ENCODE measurements at regions of chr13 and their contacts with region 1.

Region 1: DNA sequence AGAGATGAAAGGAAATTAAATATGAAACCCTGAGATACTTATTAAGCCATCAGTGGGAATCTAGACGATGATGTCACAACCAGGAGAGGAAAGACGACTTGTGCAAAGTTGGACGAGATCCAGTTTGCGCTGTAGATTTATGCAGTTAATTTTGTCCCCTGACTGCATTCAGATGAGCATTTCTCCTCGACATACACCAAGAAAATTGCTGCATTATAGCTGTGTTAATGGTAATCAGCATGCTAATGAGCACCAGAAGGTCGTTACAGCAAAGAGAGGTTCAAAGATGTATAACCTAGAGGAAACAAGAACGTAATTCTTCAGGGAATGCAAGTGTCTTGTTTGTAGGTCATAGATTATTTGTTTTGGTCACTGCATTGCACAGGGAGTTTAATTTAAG is 371.7 kb downstream of the RBM26 start:
- DNase-seq: no peak
- ATAC-seq: no peak
- H3K4me3 ChIP-seq: no peak overlapping the region
- H3K27ac ChIP-seq: no peak overlapping the region
- H3K4me1 ChIP-seq: no peaks in the 10 kb centered on the region
- H3K27me3 ChIP-seq: no peaks in the 10 kb centered on the region; a peak in 1 of 4 replicates
- CTCF ChIP-seq: no peak
- EP300 ChIP-seq: no peak
- POLR2A ChIP-seq: no peak
- RAD21 ChIP-seq: no peak

Region 2: DNA sequence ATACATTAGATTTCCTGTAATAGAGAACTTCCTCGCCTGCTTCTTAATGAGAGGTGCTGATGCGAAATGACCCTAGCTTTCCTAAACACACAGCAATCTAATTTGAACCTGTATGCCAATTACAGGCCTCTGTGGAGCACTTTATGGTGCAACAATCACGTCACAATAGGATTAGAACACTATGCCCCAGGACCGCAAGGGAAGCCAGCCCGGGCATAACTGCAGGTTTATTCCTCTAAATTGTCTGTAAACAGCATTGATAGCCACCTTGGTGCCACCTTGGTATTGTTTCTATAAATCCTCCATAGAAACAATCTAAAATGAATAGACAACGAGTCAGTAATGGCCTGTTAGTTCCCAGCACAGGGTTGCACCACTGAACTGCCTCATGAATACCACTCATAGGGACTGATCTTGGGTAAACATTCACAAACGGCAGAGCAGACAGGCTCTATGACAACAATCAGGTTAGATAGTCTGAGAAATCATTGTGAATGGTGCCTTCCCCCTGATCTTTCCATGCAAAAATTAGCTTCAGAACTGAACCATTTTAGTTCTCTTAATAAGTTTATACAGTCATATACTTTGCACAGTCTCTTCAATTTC is 192.9 kb before region 1 on chr13:
- CTCF ChIA-PET with region 1: no interaction called
- POLR2A ChIA-PET with region 1: no interaction called
- RAD21 ChIA-PET with region 1: no interaction called
- SMC1A ChIA-PET with region 1: no interaction called
- in situ Hi-C with region 1: no loop called
- intact Hi-C with region 1: no loop called
- DNase-seq: no peak
- ATAC-seq: no peak
- H3K4me3 ChIP-seq: no peak overlapping the region
- H3K27ac ChIP-seq: no peak overlapping the region
- H3K4me1 ChIP-seq: no peaks in the 10 kb centered on the region
- H3K27me3 ChIP-seq: no peaks in the 10 kb centered on the region
- CTCF ChIP-seq: no peak
- EP300 ChIP-seq: no peak
- POLR2A ChIP-seq: no peak
- RAD21 ChIP-seq: no peak

Region 3: GRCh38 chr13:79018166-79018565 is 16.2 kb before region 1 on chr13:
- CTCF ChIA-PET with region 1: interaction called, 3 read pairs
- POLR2A ChIA-PET with region 1: no interaction called
- RAD21 ChIA-PET with region 1: no interaction called
- SMC1A ChIA-PET with region 1: interaction called, 15 read pairs
- in situ Hi-C with region 1: no loop called
- intact Hi-C with region 1: no loop called
- DNase-seq: no peak
- ATAC-seq: no peak
- H3K4me3 ChIP-seq: no peak overlapping the region
- H3K27ac ChIP-seq: no peak overlapping the region
- H3K4me1 ChIP-seq: no peaks in the 10 kb centered on the region
- H3K27me3 ChIP-seq: no peaks in the 10 kb centered on the region
- CTCF ChIP-seq: no peak
- EP300 ChIP-seq: no peak
- POLR2A ChIP-seq: no peak
- RAD21 ChIP-seq: no peak

Region 4: DNA sequence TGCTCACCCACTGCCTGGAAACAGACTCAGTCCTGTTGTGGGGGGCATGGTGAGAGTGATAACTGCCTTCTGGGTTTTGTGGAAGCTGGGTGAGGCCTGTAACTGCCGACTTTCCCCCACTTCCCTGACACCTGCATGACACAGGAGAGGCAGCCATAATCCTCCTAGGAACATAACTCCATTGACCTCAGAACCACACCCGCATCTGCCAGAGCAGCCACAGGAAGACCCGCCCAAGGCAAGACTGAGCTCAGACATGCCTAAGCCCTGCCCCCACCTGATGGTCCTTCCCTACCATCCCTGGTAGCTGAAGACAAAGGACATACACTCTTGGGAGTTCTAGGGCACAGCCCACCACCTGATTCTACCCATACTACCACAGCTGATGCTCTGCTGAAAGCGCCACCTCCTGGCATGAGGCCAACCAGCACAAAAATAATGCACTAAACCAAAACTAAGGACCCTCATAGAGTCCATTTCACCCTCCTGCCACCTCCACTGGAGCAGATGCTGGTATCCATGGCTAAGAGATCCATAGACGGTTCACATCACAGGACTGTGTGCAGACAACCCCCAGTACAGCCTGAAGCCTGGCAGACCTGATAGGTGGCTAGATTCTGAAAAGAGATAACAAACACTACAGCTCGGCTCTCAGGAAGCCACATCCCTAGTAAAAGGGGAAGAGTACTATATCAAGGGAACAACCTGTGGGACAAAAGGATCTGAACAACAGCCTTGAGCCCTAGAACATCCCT is 45.2 kb after region 1 on chr13:
- CTCF ChIA-PET with region 1: no interaction called
- POLR2A ChIA-PET with region 1: no interaction called
- RAD21 ChIA-PET with region 1: no interaction called
- SMC1A ChIA-PET with region 1: no interaction called
- in situ Hi-C with region 1: no loop called
- intact Hi-C with region 1: no loop called
- DNase-seq: no peak
- ATAC-seq: no peak
- H3K4me3 ChIP-seq: no peak overlapping the region
- H3K27ac ChIP-seq: no peak overlapping the region
- H3K4me1 ChIP-seq: no peaks in the 10 kb centered on the region
- H3K27me3 ChIP-seq: no peaks in the 10 kb centered on the region
- CTCF ChIP-seq: no peak
- EP300 ChIP-seq: no peak
- POLR2A ChIP-seq: no peak
- RAD21 ChIP-seq: no peak

Measured in GM12878 (cell line).